Left cardiac atrium (tissue), 4 donors: ENCODE measurements at regions of chr14 and their contacts with region 1.

Region 1: GRCh38 chr14:91177073-91178034 is 63.5 kb downstream of the DGLUCY start:
- DNase-seq: no peak
- ATAC-seq: peak; percentile 54 to 57

Region 2: DNA sequence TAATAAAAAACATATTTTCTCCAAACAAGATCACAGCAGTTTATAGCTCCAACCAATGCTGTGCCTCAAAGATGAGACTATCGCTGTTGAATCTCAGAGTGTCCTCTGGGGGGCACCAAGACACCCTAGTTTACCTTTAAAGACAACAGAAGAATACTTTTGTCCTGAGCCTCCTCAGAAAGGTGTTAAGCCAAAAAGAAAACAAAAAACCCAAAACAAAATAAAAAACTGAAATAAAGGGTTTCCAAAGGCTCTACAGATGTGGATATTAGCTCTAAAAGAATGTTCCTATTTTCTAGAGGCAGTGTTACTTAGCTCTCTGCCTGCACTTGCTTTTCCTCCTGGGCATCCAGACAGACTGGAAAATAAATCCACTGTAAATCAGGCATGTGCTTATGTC is 274.3 kb before region 1 on chr14:
- intact Hi-C with region 1: loop called (anchors 2 to 5 kb)
- DNase-seq: peak; percentile 43
- ATAC-seq: peak; percentile 78 to 82

Region 3: GRCh38 chr14:91060351-91061055 is 116.9 kb before region 1 on chr14 and contains the start of gene RPS6KA5:
- intact Hi-C with region 1: loop called (anchors 5 kb)
- DNase-seq: peak; percentile 100
- ATAC-seq: peak; percentile 96 to 97
- total RNA-seq, gene RPS6KA5: 8.1 to 9.6 TPM

Region 4: GRCh38 chr14:91114079-91115065 is 63.0 kb before region 1 on chr14:
- intact Hi-C with region 1: loop called in 1 of 2 experiments (anchors 5 kb)
- DNase-seq: peak; percentile 30
- ATAC-seq: peak; percentile 83 to 84

Region 5: DNA sequence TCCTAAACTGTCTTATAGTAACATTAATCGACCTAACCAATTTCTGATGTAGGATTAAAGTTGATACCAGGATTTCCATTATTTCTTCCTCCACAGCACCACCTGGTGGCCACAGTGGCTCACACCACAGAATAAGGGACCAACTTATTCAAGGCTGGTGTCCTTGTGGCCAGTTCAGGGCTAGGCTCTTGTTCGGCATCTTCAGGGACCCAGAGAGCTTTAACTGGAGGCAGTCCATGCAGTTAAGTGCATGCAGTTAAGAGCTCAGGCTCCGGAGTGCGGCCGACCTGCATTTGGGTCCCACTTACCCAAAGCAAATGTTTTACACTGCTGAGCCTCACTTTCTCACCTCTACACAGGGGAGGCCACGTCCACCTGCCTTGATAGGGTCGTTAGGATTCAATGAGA is 109.2 kb after region 1 on chr14:
- intact Hi-C with region 1: loop called in 1 of 2 experiments (anchors 2 kb)
- DNase-seq: peak; percentile 76
- ATAC-seq: peak; percentile 58 to 77